Activated naive CD4-positive, alpha-beta T cell treated with anti-CD3 and anti-CD28 coated beads for 36 hours (primary cell): ENCODE measurements at regions of chr12 and their contacts with region 1.

Region 1: DNA sequence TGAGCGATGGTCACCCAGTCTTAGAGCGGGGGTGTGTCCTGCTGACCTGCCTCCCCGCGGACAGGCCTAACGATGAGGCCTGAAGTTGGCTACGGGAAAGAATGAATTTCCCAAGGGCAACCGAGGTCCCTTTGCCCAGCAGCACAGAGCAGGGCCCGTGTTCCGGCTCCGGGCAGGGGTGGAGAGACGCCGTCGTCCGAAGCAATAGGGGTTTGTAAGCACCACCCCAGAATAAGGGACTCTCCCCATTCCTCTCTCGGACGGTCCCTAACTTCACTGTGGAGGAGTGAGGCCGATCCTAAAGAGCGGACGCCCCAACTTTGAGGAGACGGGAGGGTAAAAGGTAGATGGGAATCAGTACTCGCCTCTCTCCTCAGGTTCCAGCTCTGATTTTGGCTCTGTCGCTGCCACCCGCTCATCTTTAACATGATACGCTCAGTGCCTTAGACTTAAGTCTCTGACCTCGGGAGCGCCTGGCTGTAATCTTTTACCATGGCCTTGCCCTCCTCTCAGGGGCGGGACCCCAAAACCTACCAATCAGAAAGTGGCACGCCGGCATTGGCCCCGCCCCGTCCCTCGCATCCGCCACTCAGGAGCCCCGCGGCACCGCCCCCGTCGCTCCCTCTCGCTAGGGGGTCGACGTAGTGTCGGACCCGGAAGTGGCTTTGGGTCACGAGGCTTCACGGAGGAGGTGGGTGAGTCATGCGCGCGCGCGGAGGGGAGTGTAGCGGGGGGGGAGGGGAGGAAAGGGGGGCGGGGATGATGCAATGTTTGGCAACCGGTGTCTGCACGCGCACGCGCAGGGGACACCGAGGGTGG is at the start of gene DDIT3:
- DNase-seq: peak; percentile 100
- H3K4me3 Mint-ChIP-seq: peak within 1 kb of the TSS; percentile 97
- H3K27ac Mint-ChIP-seq: peak within 1 kb of the TSS; percentile 100
- H3K4me1 Mint-ChIP-seq: peaks cover 67% of the 10 kb centered on the region
- H3K27me3 Mint-ChIP-seq: no peaks in the 10 kb centered on the region
- total RNA-seq, gene DDIT3: 44.6 to 45.6 TPM

Region 2: GRCh38 chr12:56448860-56449621 is 1071.2 kb before region 1 on chr12 and contains the start of gene TIMELESS:
- CTCF ChIA-PET with region 1: no interaction called
- intact Hi-C with region 1: loop called (anchors 5 kb)
- DNase-seq: peak; percentile 90
- H3K4me3 Mint-ChIP-seq: peak within 1 kb of the TSS; percentile 89
- H3K27ac Mint-ChIP-seq: peak within 1 kb of the TSS; percentile 96
- H3K4me1 Mint-ChIP-seq: peaks cover 16% of the 10 kb centered on the region
- H3K27me3 Mint-ChIP-seq: no peaks in the 10 kb centered on the region
- total RNA-seq, gene TIMELESS: 69.9 to 70.8 TPM

Region 3: DNA sequence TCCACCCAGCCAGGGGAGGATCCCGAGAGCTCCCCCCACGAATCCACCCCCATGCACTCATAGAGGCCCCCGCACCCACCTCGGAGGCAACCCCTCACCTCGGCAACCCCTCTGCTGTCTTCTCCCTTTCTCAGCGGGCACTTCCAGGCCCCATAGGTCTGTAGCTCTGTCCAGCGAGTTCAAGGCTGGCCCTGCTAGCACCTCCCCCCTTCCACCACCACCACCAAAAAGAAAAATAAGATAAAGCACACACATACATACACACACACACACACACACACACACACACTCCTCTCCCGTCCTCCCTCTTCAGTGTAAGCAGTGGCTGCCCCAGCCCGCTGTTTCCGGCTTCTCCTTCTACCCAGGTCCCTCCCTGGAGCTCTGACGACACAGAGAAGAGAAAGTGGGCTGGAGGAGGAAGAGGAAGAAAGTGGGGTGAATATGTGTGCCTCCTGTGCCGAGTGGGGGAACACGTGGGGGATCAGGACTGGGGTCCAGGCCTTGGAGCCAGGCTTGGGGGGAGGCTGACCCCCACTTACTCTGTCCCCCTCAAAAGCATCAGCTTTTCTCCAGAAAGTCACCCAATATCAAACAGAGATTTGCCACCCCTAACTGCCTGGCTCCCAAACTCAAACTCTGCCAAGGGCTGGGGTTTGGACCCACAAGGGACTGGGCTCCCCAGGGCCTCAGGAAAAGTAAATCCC is 409.1 kb before region 1 on chr12 and contains the start of gene STAT6:
- CTCF ChIA-PET with region 1: no interaction called
- intact Hi-C with region 1: loop called (anchors 5 kb)
- DNase-seq: peak; percentile 92
- H3K4me3 Mint-ChIP-seq: peak within 1 kb of the TSS; percentile 92
- H3K27ac Mint-ChIP-seq: peak within 1 kb of the TSS; percentile 94
- H3K4me1 Mint-ChIP-seq: peaks cover 45% of the 10 kb centered on the region
- H3K27me3 Mint-ChIP-seq: no peaks in the 10 kb centered on the region
- total RNA-seq, gene STAT6: 188 to 193 TPM

Region 4: DNA sequence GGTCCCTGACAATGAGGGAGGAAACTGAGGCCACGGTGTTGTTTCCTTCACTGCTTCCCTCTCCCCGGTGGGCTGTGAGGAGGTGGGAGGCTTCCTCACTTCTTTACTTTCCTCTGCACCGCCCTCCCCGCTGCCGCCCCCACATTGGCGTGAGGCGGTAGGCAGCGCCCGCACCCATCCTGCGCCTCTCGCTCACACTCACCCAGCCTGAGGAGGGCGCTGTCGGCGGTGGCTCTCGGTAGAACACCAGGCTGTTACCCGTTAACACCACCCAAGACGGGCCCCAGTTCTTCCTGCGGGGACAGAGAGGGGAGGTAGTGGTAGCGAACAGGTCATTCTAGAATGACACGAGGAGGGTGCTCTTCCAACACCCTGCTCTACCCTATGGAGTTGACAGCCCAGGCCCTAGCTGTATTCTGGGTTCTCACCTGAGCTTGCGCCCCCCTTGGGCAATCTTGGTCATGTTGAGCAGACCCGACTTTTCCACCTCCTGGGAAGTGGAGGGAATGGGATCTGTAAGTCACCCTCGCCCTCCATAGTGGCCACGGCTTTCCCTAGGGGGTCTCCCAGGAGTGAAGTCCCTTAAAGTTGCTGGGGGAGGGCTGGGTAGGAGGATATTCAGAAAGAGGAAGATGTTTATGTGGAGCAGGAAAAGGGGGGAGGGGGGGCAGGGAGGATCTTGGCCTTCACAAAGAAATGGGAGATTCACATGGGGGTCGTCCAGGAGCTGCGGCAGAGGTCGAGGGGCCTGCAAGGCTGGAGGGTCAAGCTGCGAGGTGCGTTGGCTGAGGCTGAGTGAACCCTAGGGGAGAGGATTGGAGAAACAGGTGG is 43.9 kb before region 1 on chr12:
- CTCF ChIA-PET with region 1: interaction called, 4 read pairs
- intact Hi-C with region 1: loop called (anchors 1 kb)
- DNase-seq: peak; percentile 94
- H3K4me3 Mint-ChIP-seq: peak overlapping the region; percentile 84
- H3K27ac Mint-ChIP-seq: peak overlapping the region; percentile 99
- H3K4me1 Mint-ChIP-seq: peaks cover 65% of the 10 kb centered on the region
- H3K27me3 Mint-ChIP-seq: no peaks in the 10 kb centered on the region

Region 5: GRCh38 chr12:57621497-57622292 is 101.4 kb after region 1 on chr12:
- CTCF ChIA-PET with region 1: interaction called, 7 read pairs
- intact Hi-C with region 1: loop called (anchors 1 kb)
- DNase-seq: peak; percentile 65
- H3K4me3 Mint-ChIP-seq: peak overlapping the region; percentile 71
- H3K27ac Mint-ChIP-seq: no peak overlapping the region
- H3K4me1 Mint-ChIP-seq: peaks cover 27% of the 10 kb centered on the region
- H3K27me3 Mint-ChIP-seq: peaks cover 86% of the 10 kb centered on the region

Region 6: DNA sequence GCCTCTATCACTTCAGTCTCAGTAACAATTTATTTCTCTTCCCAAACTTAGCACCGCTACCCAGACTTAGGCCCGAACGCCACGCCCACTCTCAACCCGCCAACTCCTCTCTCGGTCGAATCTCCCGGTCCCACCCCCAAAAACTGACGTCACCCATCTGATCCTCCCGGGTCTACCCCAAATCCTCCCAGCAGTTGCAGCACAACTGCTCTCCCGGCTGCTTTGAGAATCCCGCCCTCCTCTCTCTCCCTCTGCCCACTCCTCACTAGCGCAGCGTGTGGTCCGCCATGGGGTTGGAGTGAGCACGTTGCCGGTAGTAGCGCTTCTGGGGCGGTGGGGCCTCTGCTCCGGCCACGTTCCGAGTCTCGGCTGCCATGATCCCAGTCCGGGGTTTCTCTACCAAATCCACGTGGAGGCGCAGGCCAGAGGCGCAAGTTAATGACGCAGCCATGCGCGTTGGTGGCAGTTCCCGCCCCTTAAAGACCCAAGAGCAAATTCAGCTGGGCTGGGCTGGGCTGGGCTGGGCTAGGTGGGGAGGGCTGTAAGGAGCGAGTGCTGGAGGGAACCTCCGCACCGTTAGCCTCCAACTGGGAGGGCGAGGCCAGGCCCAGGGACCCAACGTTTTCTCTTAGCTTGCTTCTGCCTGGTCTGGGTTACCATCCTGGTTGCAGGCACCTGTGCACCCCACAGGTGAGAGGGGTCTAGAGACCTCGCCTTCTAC is 251.6 kb after region 1 on chr12 and contains the start of gene METTL1:
- CTCF ChIA-PET with region 1: no interaction called
- intact Hi-C with region 1: loop called (anchors 1 kb)
- DNase-seq: peak; percentile 97
- H3K4me3 Mint-ChIP-seq: peak within 1 kb of the TSS; percentile 98
- H3K27ac Mint-ChIP-seq: peak within 1 kb of the TSS; percentile 95
- H3K4me1 Mint-ChIP-seq: peaks cover 26% of the 10 kb centered on the region
- H3K27me3 Mint-ChIP-seq: peaks cover 2% of the 10 kb centered on the region
- total RNA-seq, gene METTL1: 17.3 to 20.4 TPM